ENCODE measurements at regions of chr5 and their contacts with region 1.

Region 1: GRCh38 chr5:42889311-42889933 is 77.7 kb upstream of the SELENOP start:
- DNase-seq: no peak
- H3K4me3 ChIP-seq: no peak overlapping the region
- H3K27ac ChIP-seq: no peak overlapping the region
- H3K4me1 ChIP-seq: no peaks in the 10 kb centered on the region
- H3K27me3 ChIP-seq: no peaks in the 10 kb centered on the region
- CTCF ChIP-seq: peak; percentile 48 to 86 (median 76)
- POLR2A ChIP-seq: no peak

Region 2: GRCh38 chr5:42767491-42768105 is 121.8 kb before region 1 on chr5:
- intact Hi-C with region 1: loop called (anchors 5 kb)
- DNase-seq: no peak
- H3K4me3 ChIP-seq: no peak overlapping the region
- H3K27ac ChIP-seq: no peak overlapping the region
- H3K4me1 ChIP-seq: no peaks in the 10 kb centered on the region
- H3K27me3 ChIP-seq: no peaks in the 10 kb centered on the region
- CTCF ChIP-seq: peak in 8 of 11 experiments; percentile 32 to 56 (median 44)
- POLR2A ChIP-seq: no peak